ENCODE measurements at regions of chr4 and their contacts with region 1.

Region 1: DNA sequence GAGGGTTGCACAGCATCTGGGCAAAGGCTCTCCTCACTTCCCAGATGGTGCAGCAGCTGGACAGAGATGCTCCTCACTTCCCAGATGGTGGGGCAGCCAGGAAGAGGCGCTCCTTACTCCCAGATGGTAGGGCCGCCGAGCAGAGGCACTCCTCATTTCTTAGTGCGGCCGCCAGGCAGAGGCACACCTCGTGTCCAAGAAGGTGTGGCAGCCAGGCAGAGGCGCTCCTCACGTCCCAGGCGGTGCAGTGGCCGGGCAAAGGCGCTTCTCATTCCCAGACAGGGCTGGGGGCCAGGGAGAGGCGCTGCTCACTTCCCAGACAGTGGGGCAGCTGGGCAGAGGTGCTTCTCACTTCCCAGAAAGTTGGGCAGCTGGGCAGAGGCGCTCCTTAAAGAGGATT is 48.8 kb downstream of the ZNF732 start:
- DNase-seq: no peak
- H3K4me3 ChIP-seq: no peak overlapping the region
- H3K27ac ChIP-seq: no peak overlapping the region
- H3K4me1 ChIP-seq: no peaks in the 10 kb centered on the region
- H3K27me3 ChIP-seq: no peaks in the 10 kb centered on the region
- CTCF ChIP-seq: no peak
- EP300 ChIP-seq: no peak
- POLR2A ChIP-seq: no peak

Region 2: GRCh38 chr4:288891-289290 is 32.4 kb after region 1 on chr4:
- intact Hi-C with region 1: no loop called
- DNase-seq: no peak
- H3K4me3 ChIP-seq: no peak overlapping the region
- H3K27ac ChIP-seq: no peak overlapping the region
- H3K4me1 ChIP-seq: no peaks in the 10 kb centered on the region
- H3K27me3 ChIP-seq: no peaks in the 10 kb centered on the region
- CTCF ChIP-seq: no peak
- EP300 ChIP-seq: no peak
- POLR2A ChIP-seq: no peak

Region 3: GRCh38 chr4:314296-314903 is 57.9 kb after region 1 on chr4:
- intact Hi-C with region 1: loop called (anchors 10 kb)
- DNase-seq: no peak
- H3K4me3 ChIP-seq: no peak overlapping the region
- H3K27ac ChIP-seq: no peak overlapping the region
- H3K4me1 ChIP-seq: no peaks in the 10 kb centered on the region
- H3K27me3 ChIP-seq: no peaks in the 10 kb centered on the region
- CTCF ChIP-seq: no peak
- EP300 ChIP-seq: no peak
- POLR2A ChIP-seq: no peak

Region 4: GRCh38 chr4:385934-386707 is 129.6 kb after region 1 on chr4:
- intact Hi-C with region 1: no loop called
- DNase-seq: no peak
- H3K4me3 ChIP-seq: no peak overlapping the region
- H3K27ac ChIP-seq: no peak overlapping the region
- H3K4me1 ChIP-seq: no peaks in the 10 kb centered on the region
- H3K27me3 ChIP-seq: no peaks in the 10 kb centered on the region
- CTCF ChIP-seq: no peak
- EP300 ChIP-seq: no peak
- POLR2A ChIP-seq: no peak